PC-9 (cell line): ENCODE measurements at regions of chrX and their contacts with region 1.

Region 1: GRCh38 chrX:8364369-8365141 is 100.1 kb upstream of the VCX3B start:
- DNase-seq: peak in 1 of 2 experiments; percentile 13
- H3K4me3 ChIP-seq: no peak overlapping the region
- H3K27ac ChIP-seq: no peak overlapping the region
- H3K4me1 ChIP-seq: no peaks in the 10 kb centered on the region
- H3K27me3 ChIP-seq: no peaks in the 10 kb centered on the region
- CTCF ChIP-seq: peak; percentile 58

Region 2: DNA sequence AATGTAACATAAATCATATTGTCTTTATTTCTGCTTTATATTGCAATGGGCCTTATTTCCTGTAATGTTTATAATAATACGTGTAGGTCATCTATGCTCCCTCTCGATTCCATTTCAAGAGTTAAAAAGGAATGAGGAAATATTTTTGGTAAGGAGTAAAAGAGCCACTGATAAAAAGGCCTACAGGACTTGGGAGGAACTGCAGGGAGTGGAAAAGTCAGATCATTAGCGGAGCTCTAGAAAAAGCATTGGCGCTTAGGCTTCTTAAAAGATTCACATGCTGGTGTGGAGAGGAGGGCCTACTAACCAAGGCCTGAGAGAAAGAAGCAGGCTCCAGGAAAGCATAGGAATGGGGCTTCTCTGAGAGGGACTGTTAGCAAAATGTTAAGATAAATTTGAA is 354.4 kb before region 1 on chrX:
- CTCF ChIA-PET with region 1: interaction called, 25 read pairs
- POLR2A ChIA-PET with region 1: no interaction called
- intact Hi-C with region 1: no loop called
- DNase-seq: no peak
- H3K4me3 ChIP-seq: no peak overlapping the region
- H3K27ac ChIP-seq: no peak overlapping the region
- H3K4me1 ChIP-seq: no peaks in the 10 kb centered on the region
- H3K27me3 ChIP-seq: no peaks in the 10 kb centered on the region
- CTCF ChIP-seq: no peak

Region 3: GRCh38 chrX:8731559-8732395 is 367.2 kb after region 1 on chrX and contains the start of gene ANOS1:
- CTCF ChIA-PET with region 1: no interaction called
- POLR2A ChIA-PET with region 1: no interaction called
- intact Hi-C with region 1: loop called (anchors 2 kb)
- DNase-seq: no peak
- H3K4me3 ChIP-seq: no peak within 1 kb of the TSS
- H3K27ac ChIP-seq: no peak within 1 kb of the TSS
- H3K4me1 ChIP-seq: peaks cover 11% of the 10 kb centered on the region
- H3K27me3 ChIP-seq: no peaks in the 10 kb centered on the region
- CTCF ChIP-seq: no peak
- total RNA-seq, gene ANOS1: 0.22 and 0.90 TPM in 2 replicates